Activated CD8-positive, alpha-beta T cell treated with anti-CD3 and anti-CD28 coated beads for 36 hours (primary cell): ENCODE measurements at regions of chr2 and their contacts with region 1.

Region 1: DNA sequence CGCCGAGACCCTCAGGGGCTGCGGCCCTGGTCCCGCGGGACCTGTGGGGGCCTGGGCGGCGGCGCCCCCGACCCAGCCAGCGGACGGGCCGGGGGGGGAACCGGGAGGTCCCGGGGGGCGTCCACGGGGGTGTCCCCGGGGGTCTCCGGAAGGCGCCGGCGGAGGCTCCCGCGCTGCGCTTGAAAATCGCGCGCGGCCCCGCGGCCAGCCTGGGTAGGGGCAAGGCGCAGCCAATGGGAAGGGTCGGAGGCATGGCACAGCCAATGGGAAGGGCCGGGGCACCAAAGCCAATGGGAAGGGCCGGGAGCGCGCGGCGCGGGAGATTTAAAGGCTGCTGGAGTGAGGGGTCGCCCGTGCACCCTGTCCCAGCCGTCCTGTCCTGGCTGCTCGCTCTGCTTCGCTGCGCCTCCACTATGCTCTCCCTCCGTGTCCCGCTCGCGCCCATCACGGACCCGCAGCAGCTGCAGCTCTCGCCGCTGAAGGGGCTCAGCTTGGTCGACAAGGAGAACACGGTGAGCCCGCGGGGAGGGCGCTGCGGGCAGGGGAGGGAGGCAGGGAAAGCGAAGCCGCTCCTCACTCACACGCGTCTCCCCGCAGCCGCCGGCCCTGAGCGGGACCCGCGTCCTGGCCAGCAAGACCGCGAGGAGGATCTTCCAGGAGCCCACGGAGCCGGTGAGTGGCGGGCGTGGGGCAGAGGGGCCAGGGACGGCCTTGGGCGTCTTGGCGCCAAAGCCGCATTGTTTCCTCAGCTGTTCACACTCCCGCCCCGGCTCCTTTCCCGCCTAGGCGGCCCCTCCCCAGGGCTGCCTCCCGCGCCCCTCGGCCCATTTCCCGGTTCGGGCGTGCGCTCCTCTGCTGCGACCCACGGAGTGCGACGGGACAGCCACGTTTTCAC is at the start of gene RRM2:
- DNase-seq: peak; percentile 98
- ATAC-seq: peak; percentile 80
- H3K4me3 Mint-ChIP-seq: peak within 1 kb of the TSS; percentile 94
- H3K27ac Mint-ChIP-seq: peak within 1 kb of the TSS; percentile 98
- H3K4me1 Mint-ChIP-seq: peaks cover 37% of the 10 kb centered on the region
- H3K27me3 Mint-ChIP-seq: peaks cover 2% of the 10 kb centered on the region
- CTCF ChIP-seq: no peak
- total RNA-seq, gene RRM2: 368 to 396 TPM

Region 2: GRCh38 chr2:10079234-10079869 is 43.3 kb before region 1 on chr2:
- CTCF ChIA-PET with region 1: interaction called, 5 read pairs
- POLR2A ChIA-PET with region 1: interaction called, 4 read pairs
- intact Hi-C with region 1: loop called (anchors 5 kb)
- DNase-seq: peak; percentile 26
- ATAC-seq: peak; percentile 26
- H3K4me3 Mint-ChIP-seq: peak overlapping the region; percentile 66
- H3K27ac Mint-ChIP-seq: no peak overlapping the region
- H3K4me1 Mint-ChIP-seq: peaks cover 24% of the 10 kb centered on the region
- H3K27me3 Mint-ChIP-seq: peaks cover 67% of the 10 kb centered on the region
- CTCF ChIP-seq: no peak

Region 3: DNA sequence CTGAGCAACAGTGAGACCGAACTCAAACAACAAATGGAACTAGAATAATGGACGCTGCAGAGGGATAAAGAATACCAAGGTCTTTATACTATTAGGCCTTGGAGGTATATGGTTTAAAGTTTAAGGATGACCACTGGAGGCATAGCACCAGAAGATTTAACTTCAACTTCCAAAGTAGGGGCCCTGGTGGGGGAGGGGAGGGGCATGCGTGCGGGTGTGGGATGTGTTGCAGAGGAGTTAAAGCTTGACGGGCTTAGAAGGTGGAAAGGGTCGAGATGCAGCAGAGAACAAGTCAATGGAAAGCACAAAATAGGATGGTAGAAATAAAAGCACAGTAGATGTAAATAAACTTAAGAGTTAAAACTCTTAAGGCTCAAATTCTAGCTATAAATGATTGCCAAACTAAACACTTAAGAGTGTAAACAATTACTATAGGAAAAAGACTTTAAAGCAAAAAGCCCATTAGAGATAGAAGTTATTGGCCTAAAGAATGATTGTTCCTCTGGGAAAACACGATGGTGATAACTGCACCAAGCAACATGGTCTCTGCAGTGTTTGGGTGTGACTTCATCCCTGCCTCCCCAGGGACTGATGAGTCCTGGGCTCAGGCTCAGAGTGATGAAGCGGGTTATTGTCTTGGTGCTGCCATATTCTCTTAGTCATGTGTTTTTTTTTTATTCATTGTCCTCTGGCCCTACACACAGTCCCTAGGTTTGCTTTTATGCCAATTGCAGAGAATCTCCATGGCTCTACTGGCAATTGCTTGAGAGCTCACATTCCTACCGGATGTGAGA is 12.9 kb after region 1 on chr2:
- CTCF ChIA-PET with region 1: interaction called, 9 read pairs
- POLR2A ChIA-PET with region 1: interaction called, 67 read pairs
- intact Hi-C with region 1: no loop called
- DNase-seq: no peak
- ATAC-seq: peak; percentile 25
- H3K4me3 Mint-ChIP-seq: no peak overlapping the region
- H3K27ac Mint-ChIP-seq: no peak overlapping the region
- H3K4me1 Mint-ChIP-seq: peaks cover 11% of the 10 kb centered on the region
- H3K27me3 Mint-ChIP-seq: no peaks in the 10 kb centered on the region
- CTCF ChIP-seq: no peak

Region 4: DNA sequence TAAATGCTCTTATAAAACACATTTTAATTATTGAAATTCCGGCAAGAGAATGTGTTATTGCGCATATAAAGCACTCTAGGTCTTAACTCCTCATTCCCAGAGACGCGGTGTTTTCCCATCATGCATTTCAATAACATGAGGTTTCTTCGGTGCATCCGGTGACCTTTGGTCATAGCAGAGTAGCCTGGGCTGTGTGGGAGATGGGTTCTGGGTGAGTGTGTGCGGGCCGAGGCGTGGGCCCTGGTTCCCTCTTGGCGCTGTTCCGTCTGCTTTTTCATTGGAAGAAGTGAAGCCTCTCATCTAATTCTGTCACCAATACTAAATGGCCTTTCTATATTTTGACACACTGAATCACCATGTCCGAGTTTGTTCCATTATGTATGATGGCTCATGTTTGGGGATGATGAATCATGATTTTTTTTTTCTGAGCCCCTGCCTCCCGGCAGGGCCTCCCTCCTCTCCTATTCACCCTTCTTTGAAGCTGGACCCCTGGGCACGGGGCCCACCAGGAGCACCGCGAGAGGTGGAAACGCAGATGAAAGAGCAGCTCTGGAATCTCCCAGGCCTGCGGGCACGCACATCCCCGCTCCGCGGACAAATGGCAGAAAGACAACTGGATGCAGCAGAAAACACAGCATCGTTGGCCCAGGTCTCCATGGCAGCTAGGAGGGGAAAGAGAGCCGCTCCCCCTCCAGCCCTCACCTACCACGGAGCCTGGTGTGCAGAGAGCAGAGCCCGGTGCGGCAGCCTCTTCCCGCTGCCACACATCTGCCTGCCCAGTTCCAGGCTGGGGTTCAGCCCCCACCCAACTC is 94.2 kb after region 1 on chr2:
- CTCF ChIA-PET with region 1: no interaction called
- POLR2A ChIA-PET with region 1: no interaction called
- intact Hi-C with region 1: no loop called
- DNase-seq: no peak
- ATAC-seq: no peak
- H3K4me3 Mint-ChIP-seq: no peak overlapping the region
- H3K27ac Mint-ChIP-seq: no peak overlapping the region
- H3K4me1 Mint-ChIP-seq: no peaks in the 10 kb centered on the region
- H3K27me3 Mint-ChIP-seq: no peaks in the 10 kb centered on the region
- CTCF ChIP-seq: no peak

Region 5: DNA sequence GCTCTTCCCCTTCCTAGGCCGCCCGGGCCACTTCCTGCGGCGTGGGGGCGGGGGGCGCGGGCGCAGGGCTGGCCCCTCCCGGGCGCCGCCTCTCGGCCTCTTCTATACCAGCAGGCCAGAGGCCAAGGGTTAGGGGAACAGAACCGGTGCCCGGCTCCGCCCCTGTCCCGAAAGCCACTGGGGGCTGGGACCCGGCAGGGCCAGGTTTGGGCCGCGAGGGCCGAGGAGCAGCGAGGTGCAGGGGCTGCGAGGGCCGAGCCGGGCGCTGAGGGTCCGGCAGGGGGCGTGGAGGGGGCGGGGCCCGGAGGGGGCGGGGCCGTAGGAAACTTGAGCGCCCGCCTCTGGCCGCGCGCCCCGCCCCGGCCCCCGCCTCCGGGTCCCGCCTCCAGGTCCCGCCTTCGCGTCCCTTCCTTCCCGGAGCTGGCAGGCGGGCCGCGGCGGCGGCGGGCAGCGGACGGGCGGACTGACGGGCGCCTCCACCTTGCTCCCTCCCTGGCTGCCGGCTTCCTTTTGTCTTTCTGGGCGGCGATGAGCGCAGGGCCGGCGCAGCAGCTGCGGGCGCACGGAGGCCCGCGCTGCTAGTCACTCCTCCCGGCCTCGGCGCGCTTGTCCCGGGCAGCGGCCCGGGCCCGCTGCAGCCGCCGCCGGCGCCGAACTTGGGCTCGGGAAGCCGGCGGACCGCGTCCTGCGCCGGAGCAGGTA is 180.0 kb after region 1 on chr2 and contains the start of gene HPCAL1:
- CTCF ChIA-PET with region 1: interaction called, 3 read pairs
- POLR2A ChIA-PET with region 1: interaction called, 6 read pairs
- intact Hi-C with region 1: loop called (anchors 10 kb)
- DNase-seq: peak; percentile 89
- ATAC-seq: peak; percentile 81
- H3K4me3 Mint-ChIP-seq: peak within 1 kb of the TSS; percentile 96
- H3K27ac Mint-ChIP-seq: peak within 1 kb of the TSS; percentile 89
- H3K4me1 Mint-ChIP-seq: peaks cover 68% of the 10 kb centered on the region
- H3K27me3 Mint-ChIP-seq: no peaks in the 10 kb centered on the region
- CTCF ChIP-seq: peak; percentile 73
- total RNA-seq, gene HPCAL1: 166 to 170 TPM